ENCODE measurements at regions of chrX and their contacts with region 1.

Region 1: GRCh38 chrX:1391707-1392375 is at the start of gene SLC25A6:
- DNase-seq: peak; percentile 98 to 99 (median 99)
- H3K4me3 ChIP-seq: peak within 1 kb of the TSS; percentile 61 to 94
- H3K4me3 Mint-ChIP-seq: peak within 1 kb of the TSS; percentile 88 to 94 (median 91)
- H3K27ac ChIP-seq: peak within 1 kb of the TSS; percentile 94
- H3K27ac Mint-ChIP-seq: peak within 1 kb of the TSS; percentile 83 to 96 (median 90)
- H3K4me1 ChIP-seq: peaks cover 47% of the 10 kb centered on the region
- H3K4me1 Mint-ChIP-seq: peaks cover 16 to 52% (median 34%) of the 10 kb centered on the region in 4 donors
- H3K27me3 ChIP-seq: no peaks in the 10 kb centered on the region
- H3K27me3 Mint-ChIP-seq: no peaks in the 10 kb centered on the region
- total RNA-seq, gene SLC25A6: 249 to 252 TPM

Region 2: GRCh38 chrX:1205680-1206611 is 185.9 kb before region 1 on chrX:
- CTCF ChIA-PET with region 1: no interaction called
- POLR2A ChIA-PET with region 1: no interaction called
- intact Hi-C with region 1: loop called (anchors 1 kb)
- DNase-seq: peak; percentile 52 to 72 (median 67)
- H3K4me3 ChIP-seq: peak overlapping the region; percentile 31 to 66
- H3K4me3 Mint-ChIP-seq: peak overlapping the region; percentile 80 to 87 (median 84)
- H3K27ac ChIP-seq: no peak overlapping the region
- H3K27ac Mint-ChIP-seq: peak overlapping the region in 5 of 7 donors; percentile 26 to 80 (median 49)
- H3K4me1 ChIP-seq: peaks cover 30% of the 10 kb centered on the region
- H3K4me1 Mint-ChIP-seq: peaks cover 19 to 36% (median 27%) of the 10 kb centered on the region in 4 donors
- H3K27me3 ChIP-seq: no peaks in the 10 kb centered on the region
- H3K27me3 Mint-ChIP-seq: no peaks in the 10 kb centered on the region

Region 3: GRCh38 chrX:1466971-1467561 is 75.2 kb after region 1 on chrX:
- CTCF ChIA-PET with region 1: no interaction called
- POLR2A ChIA-PET with region 1: no interaction called
- intact Hi-C with region 1: no loop called
- DNase-seq: peak; percentile 54 to 75 (median 66)
- H3K4me3 ChIP-seq: peak overlapping the region in 1 of 2 donors; percentile 44
- H3K4me3 Mint-ChIP-seq: peak overlapping the region; percentile 64 to 84 (median 78)
- H3K27ac ChIP-seq: peak overlapping the region; percentile 81
- H3K27ac Mint-ChIP-seq: peak overlapping the region; percentile 94 to 99 (median 96)
- H3K4me1 ChIP-seq: peaks cover 95% of the 10 kb centered on the region
- H3K4me1 Mint-ChIP-seq: peaks cover 54 to 96% (median 77%) of the 10 kb centered on the region in 4 donors
- H3K27me3 ChIP-seq: no peaks in the 10 kb centered on the region
- H3K27me3 Mint-ChIP-seq: no peaks in the 10 kb centered on the region

Region 4: GRCh38 chrX:1591102-1591900 is 199.5 kb after region 1 on chrX and contains the start of gene AKAP17A:
- CTCF ChIA-PET with region 1: no interaction called
- POLR2A ChIA-PET with region 1: no interaction called
- intact Hi-C with region 1: loop called (anchors 1 kb)
- DNase-seq: peak; percentile 93 to 99 (median 97)
- H3K4me3 ChIP-seq: peak within 1 kb of the TSS; percentile 21 to 77
- H3K4me3 Mint-ChIP-seq: peak within 1 kb of the TSS; percentile 89 to 93 (median 92)
- H3K27ac ChIP-seq: peak within 1 kb of the TSS; percentile 73
- H3K27ac Mint-ChIP-seq: peak within 1 kb of the TSS; percentile 92 to 96 (median 94)
- H3K4me1 ChIP-seq: peaks cover 41% of the 10 kb centered on the region
- H3K4me1 Mint-ChIP-seq: peaks cover 10 to 33% (median 24%) of the 10 kb centered on the region in 4 donors
- H3K27me3 ChIP-seq: no peaks in the 10 kb centered on the region
- H3K27me3 Mint-ChIP-seq: no peaks in the 10 kb centered on the region
- total RNA-seq, gene AKAP17A: 147 to 150 TPM

Measured in CD4-positive, alpha-beta memory T cell (primary cell).